ENCODE measurements at regions of chr11 and their contacts with region 1.

Region 1: GRCh38 chr11:447923-448731 is 2.0 kb upstream of the PTDSS2 start:
- DNase-seq: peak; percentile 96
- H3K4me3 Mint-ChIP-seq: peak overlapping the region; percentile 84
- H3K27ac Mint-ChIP-seq: peak overlapping the region; percentile 96
- H3K4me1 Mint-ChIP-seq: peaks cover 25% of the 10 kb centered on the region
- H3K27me3 Mint-ChIP-seq: peaks cover 8% of the 10 kb centered on the region

Region 2: GRCh38 chr11:369336-370018 is 78.7 kb before region 1 on chr11 and contains the start of gene B4GALNT4:
- CTCF ChIA-PET with region 1: no interaction called
- POLR2A ChIA-PET with region 1: no interaction called
- DNase-seq: peak; percentile 26
- H3K4me3 Mint-ChIP-seq: peak within 1 kb of the TSS; percentile 58
- H3K27ac Mint-ChIP-seq: no peak within 1 kb of the TSS
- H3K4me1 Mint-ChIP-seq: peaks cover 12% of the 10 kb centered on the region
- H3K27me3 Mint-ChIP-seq: peaks cover 42% of the 10 kb centered on the region
- total RNA-seq, gene B4GALNT4: 1.5 to 1.6 TPM

Region 3: DNA sequence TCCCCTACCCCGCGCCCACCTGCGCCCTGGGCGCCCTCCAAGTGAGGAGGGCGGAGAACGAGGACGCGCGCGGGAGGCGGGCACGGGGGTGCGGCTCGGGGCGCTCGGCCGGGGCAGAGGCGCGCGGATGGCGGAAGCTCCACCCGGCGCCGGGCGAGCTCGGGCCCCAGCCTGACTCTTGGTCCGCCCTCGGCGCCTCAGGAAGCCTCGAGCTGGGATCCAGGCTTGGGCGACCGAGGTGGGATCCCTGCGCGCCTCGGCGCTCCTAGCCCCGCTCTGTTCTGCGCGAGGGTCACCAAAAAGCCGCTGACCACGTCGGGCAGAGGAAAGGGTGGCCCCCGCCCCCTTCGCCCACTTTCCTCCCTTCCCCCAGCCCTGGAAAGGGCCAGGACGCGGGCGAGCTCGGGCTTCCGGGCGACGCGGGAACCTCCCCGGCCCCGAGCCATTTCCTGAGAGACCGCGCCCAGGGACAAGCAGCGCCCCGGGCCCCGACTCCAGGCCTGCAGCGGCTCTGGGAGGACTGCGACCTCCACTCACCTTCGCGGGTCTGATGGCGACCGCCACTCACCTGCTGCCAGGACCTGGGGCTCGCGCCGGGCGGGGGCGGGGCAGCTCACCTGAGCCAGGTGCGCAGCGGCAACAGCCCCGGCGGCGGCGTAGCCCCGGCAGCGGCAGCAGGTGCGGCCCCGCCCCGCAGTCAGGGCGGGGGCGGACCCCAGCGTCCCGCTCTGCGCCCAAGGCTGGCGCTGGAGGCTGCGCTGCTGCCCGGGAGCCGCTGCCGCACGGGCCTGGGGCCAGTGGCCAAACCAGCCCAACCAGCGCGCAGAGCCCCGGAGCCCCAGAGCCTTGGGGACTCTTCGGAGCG is 31.1 kb before region 1 on chr11:
- CTCF ChIA-PET with region 1: interaction called, 20 read pairs
- POLR2A ChIA-PET with region 1: interaction called, 4 read pairs
- DNase-seq: peak; percentile 52
- H3K4me3 Mint-ChIP-seq: peak overlapping the region; percentile 95
- H3K27ac Mint-ChIP-seq: peak overlapping the region; percentile 94
- H3K4me1 Mint-ChIP-seq: peaks cover 32% of the 10 kb centered on the region
- H3K27me3 Mint-ChIP-seq: no peaks in the 10 kb centered on the region

Region 4: DNA sequence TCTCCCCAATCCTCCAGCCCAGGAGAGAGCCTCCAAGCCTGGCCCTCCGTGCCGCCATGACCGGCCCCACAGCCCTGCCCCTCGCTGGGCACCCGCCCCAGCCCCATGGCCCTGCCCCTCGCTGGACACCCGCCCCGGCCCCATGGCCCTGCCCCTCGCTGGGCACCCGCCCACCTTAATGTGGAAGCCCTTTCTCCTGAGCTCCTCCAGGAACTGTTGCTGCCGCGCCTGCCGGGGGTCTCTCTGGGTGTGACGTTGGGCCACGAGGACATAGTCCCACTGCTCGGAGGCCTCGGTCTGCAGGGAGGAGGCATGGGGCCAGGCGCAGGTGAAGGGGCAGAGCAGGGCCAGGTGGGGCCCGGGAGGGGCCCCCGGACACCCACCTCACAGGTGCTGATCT is 14.5 kb before region 1 on chr11:
- CTCF ChIA-PET with region 1: no interaction called
- POLR2A ChIA-PET with region 1: no interaction called
- DNase-seq: no peak
- H3K4me3 Mint-ChIP-seq: no peak overlapping the region
- H3K27ac Mint-ChIP-seq: no peak overlapping the region
- H3K4me1 Mint-ChIP-seq: peaks cover 17% of the 10 kb centered on the region
- H3K27me3 Mint-ChIP-seq: no peaks in the 10 kb centered on the region

Region 5: DNA sequence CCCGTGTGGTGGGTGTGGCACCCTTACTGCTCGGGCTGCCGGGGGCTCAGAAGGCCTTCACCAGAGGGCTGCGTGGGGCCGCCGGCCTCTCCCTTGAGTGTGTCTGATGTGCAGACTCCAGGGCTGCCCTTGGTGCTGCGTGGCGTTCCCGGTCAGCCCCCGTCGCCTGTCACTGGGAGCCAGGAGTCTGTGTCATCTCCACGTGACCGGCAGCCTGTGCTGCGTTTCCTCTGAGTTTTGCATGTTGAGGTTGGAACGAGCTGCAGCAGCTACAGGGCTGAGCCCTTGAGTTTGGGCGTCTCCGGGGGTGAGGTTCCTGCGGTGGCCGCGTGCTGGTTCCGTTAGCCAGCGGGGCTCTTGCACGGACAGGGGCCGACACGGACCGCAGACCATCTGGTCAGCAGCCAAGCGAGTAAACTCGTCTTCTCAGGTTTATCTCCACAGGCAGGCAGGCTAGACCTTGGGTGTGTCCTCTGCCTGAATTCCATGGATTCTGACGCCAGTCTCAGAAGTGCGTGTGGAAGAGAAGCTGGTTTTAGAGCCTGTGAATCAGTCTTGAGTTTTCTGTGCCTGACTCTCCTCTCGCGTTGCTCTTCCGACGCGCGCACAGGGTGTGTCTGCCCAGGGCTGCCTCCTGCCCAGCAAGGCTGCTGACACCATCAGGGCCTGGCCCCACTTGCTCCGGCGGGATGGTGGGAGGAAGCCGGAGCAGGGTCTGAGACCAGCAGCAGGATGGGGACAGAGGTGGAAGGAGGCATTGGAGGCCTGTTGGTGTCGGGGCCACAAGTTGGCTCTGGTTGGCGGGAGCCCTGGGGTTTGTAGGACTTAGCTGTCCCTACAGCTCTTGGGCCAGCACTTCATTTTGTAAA is 12.4 kb after region 1 on chr11:
- CTCF ChIA-PET with region 1: interaction called, 14 read pairs
- POLR2A ChIA-PET with region 1: no interaction called
- DNase-seq: no peak
- H3K4me3 Mint-ChIP-seq: no peak overlapping the region
- H3K27ac Mint-ChIP-seq: no peak overlapping the region
- H3K4me1 Mint-ChIP-seq: peaks cover 23% of the 10 kb centered on the region
- H3K27me3 Mint-ChIP-seq: no peaks in the 10 kb centered on the region

Region 6: GRCh38 chr11:479311-479710 is 31.2 kb after region 1 on chr11:
- CTCF ChIA-PET with region 1: no interaction called
- POLR2A ChIA-PET with region 1: no interaction called
- DNase-seq: no peak
- H3K4me3 Mint-ChIP-seq: no peak overlapping the region
- H3K27ac Mint-ChIP-seq: no peak overlapping the region
- H3K4me1 Mint-ChIP-seq: no peaks in the 10 kb centered on the region
- H3K27me3 Mint-ChIP-seq: no peaks in the 10 kb centered on the region

Measured in activated CD4-positive, alpha-beta T cell treated with anti-CD3 and anti-CD28 coated beads, Interleukin-2, amount 10 ng/mL, durations not matched to agents 7 days and 5 days (primary cell).